Activated T-helper 2 cell treated with anti-CD3 and anti-CD28 coated beads, Interferon-gamma antibody, Interleukin-2, Interleukin-4, amounts not matched to agents 10 μg/mL and 5 μg/mL and 100 μg/mL, durations not matched to agents 14 hours and 24 hours and 36 hours (primary cell): ENCODE measurements at regions of chr12 and their contacts with region 1.

Region 1: GRCh38 chr12:112096667-112097066 is 11.9 kb downstream of the NAA25 start:
- DNase-seq: no peak
- H3K4me3 Mint-ChIP-seq: peak overlapping the region; percentile 21
- H3K27ac Mint-ChIP-seq: peak overlapping the region; percentile 85
- H3K4me1 Mint-ChIP-seq: peaks cover 27% of the 10 kb centered on the region
- H3K27me3 Mint-ChIP-seq: no peaks in the 10 kb centered on the region

Region 2: DNA sequence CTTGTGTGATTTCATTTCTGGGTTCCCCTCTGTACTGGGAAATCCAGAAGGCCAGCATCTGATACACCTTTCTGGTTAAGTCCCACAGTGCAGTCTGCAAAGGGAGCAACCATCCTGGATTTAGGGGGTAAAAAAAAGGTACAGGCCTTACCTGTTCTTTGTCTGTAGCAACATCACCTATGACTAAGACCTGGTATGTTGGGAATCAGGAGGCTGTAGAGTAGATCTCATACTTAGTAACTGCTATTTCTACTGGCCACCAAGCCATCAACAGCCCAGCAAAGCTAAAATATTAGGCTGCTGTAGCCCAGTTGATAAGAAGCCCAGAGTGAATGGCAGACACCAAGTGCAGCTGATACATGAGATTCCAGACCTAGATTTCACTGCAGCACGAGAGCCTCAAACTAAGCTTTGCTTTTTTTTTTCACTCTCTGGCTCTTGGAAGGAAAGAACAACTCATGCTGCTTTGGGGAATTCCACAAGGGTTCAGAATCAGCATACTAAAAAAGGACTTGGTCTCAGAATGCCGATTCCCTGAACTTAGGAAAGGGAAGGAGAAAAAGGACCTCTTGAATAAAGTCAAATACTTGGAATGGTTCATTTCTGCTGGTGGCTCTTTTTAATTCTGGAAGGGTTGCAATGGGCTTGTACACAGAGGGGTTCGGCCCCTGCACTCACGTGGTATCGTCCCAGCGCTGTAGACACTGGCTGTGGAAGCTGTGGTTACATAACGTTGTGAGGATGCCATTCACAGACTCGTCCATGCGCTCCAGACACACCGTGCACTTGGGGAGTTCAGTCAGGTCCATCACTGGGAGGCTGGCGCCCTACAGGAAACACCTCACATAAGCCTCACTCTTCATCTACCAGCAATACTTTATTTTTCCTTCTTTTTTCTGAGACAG is 431.5 kb before region 1 on chr12:
- intact Hi-C with region 1: no loop called
- DNase-seq: no peak
- H3K4me3 Mint-ChIP-seq: no peak overlapping the region
- H3K27ac Mint-ChIP-seq: no peak overlapping the region
- H3K4me1 Mint-ChIP-seq: no peaks in the 10 kb centered on the region
- H3K27me3 Mint-ChIP-seq: no peaks in the 10 kb centered on the region

Region 3: DNA sequence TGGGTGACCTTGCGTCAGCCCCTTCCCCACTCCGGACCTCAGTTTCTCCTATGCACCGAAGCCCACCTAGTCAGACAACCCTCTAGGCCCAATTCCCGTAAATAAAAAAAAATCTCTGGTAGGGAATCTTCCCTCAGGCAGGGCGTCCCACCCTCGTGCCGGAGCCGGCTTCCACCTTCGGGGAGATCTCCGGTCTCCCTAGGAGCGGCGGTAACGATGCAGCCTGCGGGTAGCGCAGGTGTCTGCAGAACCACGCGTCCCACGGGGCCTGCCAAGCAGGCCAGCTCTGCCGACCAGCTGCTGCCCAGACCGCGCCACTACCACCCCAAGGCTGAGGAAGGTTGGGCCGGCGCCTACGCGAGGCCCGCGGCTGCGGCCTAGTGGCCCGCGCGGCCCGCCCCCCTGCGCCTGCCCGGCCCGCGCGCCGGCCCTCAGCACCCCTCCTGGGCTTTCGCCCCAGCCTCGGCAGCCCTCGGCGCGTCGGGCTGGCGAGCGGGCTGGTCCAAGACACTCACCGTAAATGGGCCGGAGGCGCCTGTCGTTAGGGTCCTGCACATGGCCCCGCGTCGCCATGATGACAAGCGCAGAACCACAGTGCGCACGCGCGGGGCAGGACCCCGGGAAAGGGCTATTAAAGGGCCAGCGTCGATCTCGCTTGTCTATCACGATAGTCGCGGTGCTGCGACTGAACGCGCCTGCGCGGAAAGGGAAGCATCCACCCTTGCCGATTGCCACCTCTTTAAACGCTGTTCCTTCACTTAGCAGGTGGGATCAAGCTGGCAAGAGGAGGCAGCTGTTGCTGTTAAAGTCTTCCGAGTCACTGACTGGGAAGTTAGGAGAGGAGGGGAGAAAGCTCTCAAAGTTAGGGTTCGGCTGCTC is 11.8 kb after region 1 on chr12 and contains the start of gene NAA25:
- intact Hi-C with region 1: loop called (anchors 1 kb)
- DNase-seq: peak; percentile 84
- H3K4me3 Mint-ChIP-seq: peak within 1 kb of the TSS; percentile 97
- H3K27ac Mint-ChIP-seq: peak within 1 kb of the TSS; percentile 98
- H3K4me1 Mint-ChIP-seq: peaks cover 47% of the 10 kb centered on the region
- H3K27me3 Mint-ChIP-seq: no peaks in the 10 kb centered on the region
- total RNA-seq, gene NAA25: 43.3 and 48.7 TPM in 2 replicates